ENCODE measurements at regions of chr6 and their contacts with region 1.

Region 1: DNA sequence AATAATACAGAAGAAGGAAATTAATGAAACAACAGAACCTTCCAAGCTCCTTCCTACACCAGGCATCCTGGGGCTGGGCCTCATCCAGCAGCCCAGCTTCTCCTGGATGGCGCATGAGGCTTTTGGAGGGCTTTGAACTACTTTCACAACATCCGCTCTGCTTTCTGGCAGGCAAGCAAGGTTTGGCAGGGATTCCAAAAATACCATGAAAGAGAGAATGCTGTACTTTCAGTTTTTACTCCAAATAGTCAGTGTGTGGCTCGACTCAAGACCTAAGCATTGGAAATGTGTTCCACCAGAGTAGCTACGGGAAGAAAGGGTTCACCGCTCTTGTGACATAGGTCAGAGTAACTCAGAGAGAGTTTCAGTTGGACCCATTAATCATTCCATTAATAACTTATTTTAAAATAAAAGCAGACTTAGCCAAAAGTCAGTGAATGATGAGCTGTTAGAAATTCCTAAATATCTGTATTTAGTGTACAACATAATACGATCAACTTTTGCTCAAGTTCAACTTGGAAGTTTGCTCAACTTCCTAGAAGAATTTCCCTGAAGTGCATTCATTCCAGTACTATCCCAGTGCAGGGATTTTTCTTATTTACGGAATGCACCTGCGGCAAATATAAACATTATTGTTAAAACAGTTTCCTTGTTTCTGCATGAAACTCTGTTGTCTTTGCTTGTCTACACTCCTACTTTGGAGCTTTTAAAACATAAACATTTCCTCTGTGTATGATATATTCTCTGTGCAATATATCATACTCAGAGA is 125.5 kb downstream of the OPRM1 start:
- DNase-seq: peak in 1 of 2 donors; percentile 83
- H3K4me3 ChIP-seq: no peak overlapping the region
- H3K27ac ChIP-seq: peak overlapping the region in 3 of 5 donors; percentile 1 to 20 (median 19)
- H3K4me1 ChIP-seq: peaks cover 0 to 14% (median 5%) of the 10 kb centered on the region in 4 donors
- H3K27me3 ChIP-seq: no peaks in the 10 kb centered on the region
- CTCF ChIP-seq: no peak
- EP300 ChIP-seq: no peak
- POLR2A ChIP-seq: no peak

Region 2: DNA sequence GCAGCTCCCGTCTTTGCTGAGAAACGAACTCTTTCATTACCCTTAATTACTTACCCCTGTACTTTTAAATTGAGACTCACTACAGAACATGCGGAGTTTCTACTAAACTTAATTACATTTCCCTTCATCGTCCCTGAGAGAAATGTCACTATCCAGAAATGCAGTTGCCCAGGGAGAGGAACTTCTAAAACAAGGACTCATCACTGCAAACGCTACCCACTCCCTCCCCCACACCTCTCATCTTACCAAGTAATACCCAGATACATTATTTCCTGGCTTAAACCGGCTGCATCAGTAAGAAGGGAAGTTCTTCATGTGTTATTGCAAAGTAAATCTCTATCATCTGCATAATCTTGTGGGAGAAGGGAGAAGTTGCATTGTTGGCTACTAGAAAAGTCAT is 53.7 kb after region 1 on chr6:
- intact Hi-C with region 1: no loop called
- DNase-seq: no peak
- H3K4me3 ChIP-seq: no peak overlapping the region
- H3K27ac ChIP-seq: no peak overlapping the region
- H3K4me1 ChIP-seq: no peaks in the 10 kb centered on the region
- H3K27me3 ChIP-seq: no peaks in the 10 kb centered on the region
- CTCF ChIP-seq: no peak
- EP300 ChIP-seq: no peak
- POLR2A ChIP-seq: no peak

Region 3: DNA sequence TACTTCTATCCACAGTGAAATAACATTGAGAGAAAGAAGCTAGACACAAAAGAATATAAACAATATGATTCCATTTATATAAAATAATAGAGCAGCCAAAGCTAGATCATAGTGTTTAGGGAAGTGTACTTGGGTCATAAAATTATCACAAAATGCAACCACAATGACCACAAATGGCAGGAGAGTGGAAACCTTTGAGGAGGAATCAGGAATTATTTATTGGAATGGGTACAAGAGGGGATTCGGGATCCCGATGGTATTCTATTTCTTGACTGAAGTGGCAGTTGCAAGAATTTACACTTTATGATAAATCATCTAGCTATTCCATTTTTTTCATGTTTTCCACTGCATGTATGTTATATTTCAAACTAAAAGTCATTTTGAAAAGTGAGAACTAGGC is 115.9 kb after region 1 on chr6:
- intact Hi-C with region 1: loop called (anchors 5 kb)
- DNase-seq: no peak
- H3K4me3 ChIP-seq: no peak overlapping the region
- H3K27ac ChIP-seq: no peak overlapping the region
- H3K4me1 ChIP-seq: peaks cover 0 to 13% (median 4%) of the 10 kb centered on the region in 4 donors
- H3K27me3 ChIP-seq: no peaks in the 10 kb centered on the region
- CTCF ChIP-seq: no peak
- EP300 ChIP-seq: no peak
- POLR2A ChIP-seq: no peak

Region 4: DNA sequence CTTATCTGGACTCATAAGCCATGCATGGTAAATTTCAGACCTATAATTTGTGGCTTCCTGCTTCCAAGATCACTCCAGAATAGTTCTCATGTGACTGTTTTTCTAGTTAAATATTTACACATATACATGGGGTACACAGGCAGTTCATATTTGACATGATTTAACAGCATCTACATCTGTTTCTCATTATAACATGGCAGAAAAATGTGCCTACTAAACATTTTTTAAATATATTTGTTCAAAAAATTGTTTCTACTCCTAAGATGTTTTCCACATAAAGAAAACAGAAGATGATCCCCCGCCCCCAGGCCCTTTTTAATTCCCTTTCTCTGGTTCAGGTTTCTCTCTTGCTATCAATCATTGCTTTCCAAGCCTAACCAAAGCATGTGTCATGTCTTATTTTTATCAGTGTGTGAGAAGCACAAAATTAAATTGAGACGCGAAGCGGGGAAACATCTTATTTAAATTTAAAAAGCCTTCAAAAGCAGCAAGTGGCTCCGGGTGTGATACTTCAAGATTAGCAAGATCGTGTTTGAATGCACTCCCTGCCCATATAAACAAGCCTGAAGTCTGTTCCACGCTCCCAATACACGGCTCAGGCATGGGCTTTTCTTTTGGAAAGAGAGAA is 154.8 kb after region 1 on chr6:
- intact Hi-C with region 1: no loop called
- DNase-seq: peak in 1 of 2 donors; percentile 60
- H3K4me3 ChIP-seq: no peak overlapping the region
- H3K27ac ChIP-seq: no peak overlapping the region
- H3K4me1 ChIP-seq: peaks cover 0 to 15% (median 3%) of the 10 kb centered on the region in 4 donors
- H3K27me3 ChIP-seq: no peaks in the 10 kb centered on the region
- CTCF ChIP-seq: no peak
- EP300 ChIP-seq: no peak
- POLR2A ChIP-seq: no peak

Measured in stomach (tissue), 19 donors.